ENCODE measurements at regions of chr1 and their contacts with region 1.

Region 1: DNA sequence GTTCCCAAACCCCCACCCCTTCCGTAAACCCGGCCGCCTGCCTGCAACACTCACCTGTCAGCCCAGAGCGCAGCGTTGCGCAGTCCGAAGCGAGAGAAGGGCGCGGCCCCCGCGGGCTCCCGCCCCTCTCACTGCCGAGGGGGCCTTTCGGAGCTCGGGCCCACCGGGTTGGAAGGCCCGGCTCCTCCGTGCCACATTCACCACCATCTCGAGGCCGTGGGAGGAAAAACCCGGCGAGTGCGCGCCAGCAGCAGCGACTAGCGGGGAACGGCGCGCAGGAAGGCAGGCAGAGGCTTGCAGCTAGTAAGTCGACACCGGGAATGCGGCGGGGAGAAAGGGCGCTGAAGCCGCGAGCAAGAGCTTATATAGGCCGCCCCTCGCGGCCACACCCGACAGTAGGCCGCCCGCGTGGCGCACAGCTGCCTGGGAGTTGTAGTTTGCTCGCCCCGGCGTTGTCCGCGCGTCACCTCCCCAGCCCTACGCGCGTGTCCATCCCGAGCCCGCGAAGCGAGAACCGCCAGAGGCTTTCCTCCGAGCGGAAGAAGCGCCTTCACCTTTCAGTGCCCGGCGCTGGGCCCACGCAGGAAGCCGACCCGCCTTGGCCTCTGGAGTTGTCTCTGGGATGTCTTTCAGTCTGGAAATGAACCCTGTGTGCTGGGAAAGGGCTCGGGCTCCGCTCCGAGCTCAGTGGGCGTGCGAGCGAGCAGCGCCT is 10.4 kb upstream of the RAB42 start:
- DNase-seq: peak; percentile 96
- ATAC-seq: peak; percentile 86
- H3K4me3 Mint-ChIP-seq: peak overlapping the region; percentile 94
- H3K27ac Mint-ChIP-seq: peak overlapping the region; percentile 94
- H3K4me1 Mint-ChIP-seq: peaks cover 36% of the 10 kb centered on the region
- H3K27me3 Mint-ChIP-seq: no peaks in the 10 kb centered on the region

Region 2: DNA sequence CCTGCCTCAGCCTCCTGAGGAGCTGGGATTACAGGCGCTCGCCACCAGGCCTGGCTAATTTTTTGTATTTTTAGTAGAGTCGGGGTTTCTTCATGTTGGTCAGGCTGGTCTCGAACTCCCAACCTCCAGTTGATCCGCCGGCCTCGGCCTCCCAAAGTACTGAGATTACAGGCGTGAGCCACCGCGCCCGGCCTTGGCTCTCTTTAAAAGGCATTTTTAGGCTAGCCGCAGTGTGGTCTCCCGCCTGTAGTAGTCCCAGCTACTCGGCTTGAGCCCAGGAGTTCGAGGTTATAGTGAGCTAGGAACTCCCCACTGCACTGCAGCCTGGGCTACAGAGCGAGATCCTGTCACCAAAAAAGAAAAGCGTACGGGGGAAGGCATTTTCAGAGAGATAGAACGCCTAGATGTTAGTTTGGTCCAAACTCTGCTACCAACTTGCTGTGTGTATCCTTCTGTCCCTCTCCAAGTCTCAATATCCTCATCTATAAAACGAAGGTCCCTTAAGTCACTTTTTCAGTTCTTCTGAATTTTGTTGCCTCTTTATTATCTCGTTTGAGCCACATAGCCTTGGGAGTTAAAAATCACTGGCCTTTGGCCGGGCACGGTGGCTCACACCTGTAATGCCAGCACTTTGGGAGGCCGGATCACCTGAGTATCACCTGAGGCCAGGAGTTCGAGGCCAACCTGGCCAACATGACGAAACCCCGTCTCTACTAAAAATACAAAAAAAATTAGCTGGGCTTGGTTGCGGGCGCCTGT is 252.1 kb before region 1 on chr1:
- CTCF ChIA-PET with region 1: no interaction called
- POLR2A ChIA-PET with region 1: interaction called, 20 read pairs
- DNase-seq: peak; percentile 66
- ATAC-seq: peak; percentile 21
- H3K4me3 Mint-ChIP-seq: peak overlapping the region; percentile 95
- H3K27ac Mint-ChIP-seq: peak overlapping the region; percentile 98
- H3K4me1 Mint-ChIP-seq: peaks cover 35% of the 10 kb centered on the region
- H3K27me3 Mint-ChIP-seq: no peaks in the 10 kb centered on the region

Region 3: GRCh38 chr1:28437264-28437932 is 144.3 kb before region 1 on chr1:
- CTCF ChIA-PET with region 1: no interaction called
- POLR2A ChIA-PET with region 1: no interaction called
- DNase-seq: no peak
- ATAC-seq: no peak
- H3K4me3 Mint-ChIP-seq: peak overlapping the region; percentile 56
- H3K27ac Mint-ChIP-seq: no peak overlapping the region
- H3K4me1 Mint-ChIP-seq: peaks cover 23% of the 10 kb centered on the region
- H3K27me3 Mint-ChIP-seq: no peaks in the 10 kb centered on the region

Region 4: GRCh38 chr1:28505406-28506187 is 76.1 kb before region 1 on chr1 and contains the start of gene RCC1:
- CTCF ChIA-PET with region 1: interaction called, 5 read pairs
- POLR2A ChIA-PET with region 1: interaction called, 97 read pairs
- DNase-seq: peak; percentile 98
- ATAC-seq: peak; percentile 88
- H3K4me3 Mint-ChIP-seq: peak within 1 kb of the TSS; percentile 97
- H3K27ac Mint-ChIP-seq: peak within 1 kb of the TSS; percentile 97
- H3K4me1 Mint-ChIP-seq: peaks cover 28% of the 10 kb centered on the region
- H3K27me3 Mint-ChIP-seq: no peaks in the 10 kb centered on the region
- total RNA-seq, gene RCC1: 80.7 to 85.3 TPM

Region 5: GRCh38 chr1:28552758-28553663 is 28.7 kb before region 1 on chr1 and contains the start of gene TRNAU1AP:
- CTCF ChIA-PET with region 1: interaction called, 14 read pairs
- POLR2A ChIA-PET with region 1: interaction called, 82 read pairs
- DNase-seq: peak; percentile 98
- ATAC-seq: peak; percentile 95
- H3K4me3 Mint-ChIP-seq: peak within 1 kb of the TSS; percentile 98
- H3K27ac Mint-ChIP-seq: peak within 1 kb of the TSS; percentile 97
- H3K4me1 Mint-ChIP-seq: peaks cover 14% of the 10 kb centered on the region
- H3K27me3 Mint-ChIP-seq: no peaks in the 10 kb centered on the region
- total RNA-seq, gene TRNAU1AP: 73.2 to 77.7 TPM

Region 6: GRCh38 chr1:28591708-28592320 is 10.1 kb after region 1 on chr1 and contains the start of gene RAB42:
- CTCF ChIA-PET with region 1: interaction called, 4 read pairs
- POLR2A ChIA-PET with region 1: interaction called, 17 read pairs
- DNase-seq: no peak
- ATAC-seq: peak; percentile 50
- H3K4me3 Mint-ChIP-seq: peak within 1 kb of the TSS; percentile 69
- H3K27ac Mint-ChIP-seq: no peak within 1 kb of the TSS
- H3K4me1 Mint-ChIP-seq: peaks cover 10% of the 10 kb centered on the region
- H3K27me3 Mint-ChIP-seq: peaks cover 10% of the 10 kb centered on the region
- total RNA-seq, gene RAB42: not detected

Region 7: DNA sequence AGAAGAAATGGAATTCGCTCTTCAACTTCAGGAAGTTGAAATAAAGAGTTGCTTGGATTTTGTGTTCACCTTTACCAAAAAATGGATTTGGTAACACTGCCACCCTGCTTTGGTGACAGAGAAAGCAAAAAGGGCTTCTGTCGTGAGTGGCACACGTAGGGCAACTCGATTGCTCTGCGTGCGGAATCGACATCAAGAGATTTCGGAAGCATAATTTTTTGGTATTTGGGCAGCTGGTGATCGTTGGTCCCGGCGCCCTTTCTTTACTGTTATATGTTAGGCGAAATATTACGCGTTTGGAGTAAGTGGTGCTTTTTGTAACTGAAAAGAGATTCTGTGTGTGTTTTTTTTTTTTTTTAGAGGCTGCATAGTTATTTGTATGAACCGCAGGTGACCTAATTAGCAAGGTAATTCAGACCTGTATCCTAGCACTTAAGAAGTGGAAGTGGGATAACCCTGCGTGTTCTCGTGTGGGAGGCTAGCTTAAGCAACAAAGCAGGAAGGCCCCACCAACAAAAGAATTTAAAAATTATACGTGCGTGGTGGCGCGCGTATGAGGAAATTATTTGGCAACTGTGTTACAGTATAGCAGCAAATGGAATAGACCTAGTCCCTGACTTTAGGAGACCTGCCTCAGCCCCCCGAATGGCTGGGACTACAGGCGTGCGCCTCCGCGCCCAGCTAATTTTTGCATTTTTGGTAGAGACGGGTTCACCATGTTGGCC is 66.9 kb after region 1 on chr1 and contains the start of gene RNU11:
- CTCF ChIA-PET with region 1: interaction called, 9 read pairs
- POLR2A ChIA-PET with region 1: interaction called, 45 read pairs
- DNase-seq: peak; percentile 93
- ATAC-seq: peak; percentile 80
- H3K4me3 Mint-ChIP-seq: peak within 1 kb of the TSS; percentile 84
- H3K27ac Mint-ChIP-seq: peak within 1 kb of the TSS; percentile 99
- H3K4me1 Mint-ChIP-seq: peaks cover 32% of the 10 kb centered on the region
- H3K27me3 Mint-ChIP-seq: no peaks in the 10 kb centered on the region
- total RNA-seq, gene RNU11: not detected

Region 8: GRCh38 chr1:28877132-28877781 is 295.6 kb after region 1 on chr1:
- CTCF ChIA-PET with region 1: interaction called, 13 read pairs
- POLR2A ChIA-PET with region 1: interaction called, 14 read pairs
- DNase-seq: peak; percentile 83
- ATAC-seq: peak; percentile 90
- H3K4me3 Mint-ChIP-seq: no peak overlapping the region
- H3K27ac Mint-ChIP-seq: no peak overlapping the region
- H3K4me1 Mint-ChIP-seq: peaks cover 6% of the 10 kb centered on the region
- H3K27me3 Mint-ChIP-seq: peaks cover 7% of the 10 kb centered on the region

Measured in activated CD8-positive, alpha-beta T cell treated with anti-CD3 and anti-CD28 coated beads, Interleukin-2, amount 10 ng/mL, durations not matched to agents 7 days and 5 days (primary cell).